MCF 10A (cell line): ENCODE measurements at regions of chr7 and their contacts with region 1.

Region 1: GRCh38 chr7:144391823-144392255 is 11.7 kb downstream of the NOBOX start:
- DNase-seq: peak; percentile 69
- H3K4me3 Mint-ChIP-seq: no peak overlapping the region
- H3K27ac Mint-ChIP-seq: no peak overlapping the region
- H3K4me1 Mint-ChIP-seq: peaks cover 8% of the 10 kb centered on the region
- H3K27me3 Mint-ChIP-seq: no peaks in the 10 kb centered on the region
- CTCF ChIP-seq: peak; percentile 60

Region 2: DNA sequence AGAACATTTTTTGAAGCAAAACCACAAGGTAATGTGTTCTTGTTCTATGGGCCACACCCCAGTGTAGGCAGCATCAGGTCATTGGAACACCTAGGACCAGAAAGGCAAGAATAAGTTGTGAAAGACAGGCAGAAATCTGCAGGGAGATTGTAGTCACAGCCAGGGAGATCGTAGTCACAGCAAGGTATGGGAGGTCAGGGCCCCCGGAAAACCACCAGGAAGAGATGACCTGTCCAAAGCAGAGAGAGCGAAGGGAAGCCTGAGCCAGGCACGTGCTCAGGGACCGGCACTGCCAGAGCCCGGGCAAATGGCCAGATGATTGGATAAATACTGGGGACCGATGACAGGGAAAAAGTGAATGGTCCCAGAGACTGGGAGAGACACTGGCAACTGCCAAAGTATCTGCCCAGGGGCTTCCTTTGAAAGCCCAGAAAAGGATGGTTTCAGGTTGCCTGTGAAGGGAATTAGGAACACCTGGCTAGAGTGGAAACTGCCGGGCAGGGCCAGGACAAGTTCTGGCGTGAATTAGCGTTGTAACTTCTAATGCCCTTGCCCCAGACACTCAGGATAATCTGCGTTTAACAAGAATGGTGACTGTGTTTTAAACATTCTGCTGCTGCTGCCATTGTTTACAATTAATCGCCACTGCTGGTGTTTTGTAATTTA is 15.6 kb after region 1 on chr7:
- CTCF ChIA-PET with region 1: interaction called, 30 read pairs
- POLR2A ChIA-PET with region 1: interaction called, 6 read pairs
- intact Hi-C with region 1: no loop called
- DNase-seq: peak; percentile 81
- H3K4me3 Mint-ChIP-seq: peak overlapping the region; percentile 49
- H3K27ac Mint-ChIP-seq: peak overlapping the region; percentile 80
- H3K4me1 Mint-ChIP-seq: peaks cover 23% of the 10 kb centered on the region
- H3K27me3 Mint-ChIP-seq: no peaks in the 10 kb centered on the region
- CTCF ChIP-seq: no peak

Region 3: GRCh38 chr7:144416341-144416740 is 24.5 kb after region 1 on chr7:
- CTCF ChIA-PET with region 1: interaction called, 29 read pairs
- POLR2A ChIA-PET with region 1: interaction called, 3 read pairs
- intact Hi-C with region 1: no loop called
- DNase-seq: peak; percentile 22
- H3K4me3 Mint-ChIP-seq: no peak overlapping the region
- H3K27ac Mint-ChIP-seq: no peak overlapping the region
- H3K4me1 Mint-ChIP-seq: peaks cover 13% of the 10 kb centered on the region
- H3K27me3 Mint-ChIP-seq: no peaks in the 10 kb centered on the region
- CTCF ChIP-seq: no peak

Region 4: DNA sequence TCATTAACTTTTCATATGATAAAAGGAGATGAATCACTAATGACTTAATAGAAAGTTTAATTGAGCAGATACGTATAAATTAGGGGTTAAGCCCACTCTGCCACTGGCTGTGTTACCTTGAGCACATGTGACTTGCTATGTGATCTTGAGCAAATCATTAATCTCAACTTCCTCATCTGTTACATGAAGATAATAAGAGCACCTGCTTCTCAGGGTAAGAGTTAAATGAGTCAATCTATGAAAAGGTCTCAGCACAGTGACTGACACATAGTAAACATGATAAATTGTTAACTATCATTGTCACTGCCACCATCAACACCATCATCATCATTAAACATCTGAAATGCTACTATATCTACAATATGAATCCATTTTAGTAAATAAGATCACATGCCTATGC is 333.2 kb after region 1 on chr7:
- CTCF ChIA-PET with region 1: no interaction called
- POLR2A ChIA-PET with region 1: no interaction called
- intact Hi-C with region 1: no loop called
- DNase-seq: no peak
- H3K4me3 Mint-ChIP-seq: no peak overlapping the region
- H3K27ac Mint-ChIP-seq: no peak overlapping the region
- H3K4me1 Mint-ChIP-seq: no peaks in the 10 kb centered on the region
- H3K27me3 Mint-ChIP-seq: no peaks in the 10 kb centered on the region
- CTCF ChIP-seq: no peak